ENCODE measurements at regions of chr16 and their contacts with region 1.

Region 1: GRCh38 chr16:69381231-69381630 is 4.6 kb downstream of the TERF2 start:
- DNase-seq: no peak
- H3K4me3 ChIP-seq: no peak overlapping the region
- H3K27ac ChIP-seq: no peak overlapping the region
- H3K27me3 ChIP-seq: no peaks in the 10 kb centered on the region
- CTCF ChIP-seq: no peak

Region 2: DNA sequence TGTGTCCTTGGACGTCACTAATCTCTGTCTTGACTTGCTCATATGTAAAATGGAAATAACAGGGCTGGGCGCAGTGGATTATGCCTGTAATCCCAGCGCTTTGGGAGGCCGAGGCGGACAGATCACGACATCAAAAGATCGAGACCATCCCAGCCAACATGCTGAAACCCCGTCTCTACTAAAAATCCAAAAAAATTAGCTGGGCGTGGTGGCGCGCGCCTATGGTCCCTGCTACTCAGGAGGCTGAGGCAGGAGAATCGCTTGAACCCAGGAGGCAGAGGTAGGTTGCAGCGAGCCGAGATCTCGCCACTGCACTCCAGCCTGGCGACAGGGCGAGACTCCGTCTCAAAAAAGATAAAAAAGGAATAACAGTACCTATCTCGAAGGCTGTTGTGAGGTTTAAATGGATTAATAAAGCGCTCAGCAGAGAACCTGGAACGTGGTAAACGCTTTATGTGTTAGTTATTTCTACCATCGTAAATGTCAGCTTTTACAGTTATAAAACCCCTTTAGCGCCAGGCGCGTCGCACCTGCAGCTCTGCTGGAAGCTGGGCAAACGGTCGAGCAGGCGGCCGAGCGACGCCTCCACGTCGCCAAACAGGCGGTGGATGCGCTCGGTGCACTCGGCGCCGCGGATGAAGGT is 42.5 kb before region 1 on chr16:
- CTCF ChIA-PET with region 1: no interaction called
- POLR2A ChIA-PET with region 1: no interaction called
- DNase-seq: no peak
- H3K4me3 ChIP-seq: peak overlapping the region; percentile 94
- H3K27ac ChIP-seq: peak overlapping the region; percentile 80
- H3K27me3 ChIP-seq: no peaks in the 10 kb centered on the region
- CTCF ChIP-seq: no peak

Region 3: GRCh38 chr16:69396187-69397061 is 15.2 kb after region 1 on chr16:
- CTCF ChIA-PET with region 1: interaction called, 18 read pairs
- POLR2A ChIA-PET with region 1: no interaction called
- DNase-seq: peak; percentile 92
- H3K4me3 ChIP-seq: no peak overlapping the region; the same call in none of the 2 replicates
- H3K27ac ChIP-seq: peak overlapping the region; percentile 82
- H3K27me3 ChIP-seq: no peaks in the 10 kb centered on the region
- CTCF ChIP-seq: peak; percentile 59

Region 4: DNA sequence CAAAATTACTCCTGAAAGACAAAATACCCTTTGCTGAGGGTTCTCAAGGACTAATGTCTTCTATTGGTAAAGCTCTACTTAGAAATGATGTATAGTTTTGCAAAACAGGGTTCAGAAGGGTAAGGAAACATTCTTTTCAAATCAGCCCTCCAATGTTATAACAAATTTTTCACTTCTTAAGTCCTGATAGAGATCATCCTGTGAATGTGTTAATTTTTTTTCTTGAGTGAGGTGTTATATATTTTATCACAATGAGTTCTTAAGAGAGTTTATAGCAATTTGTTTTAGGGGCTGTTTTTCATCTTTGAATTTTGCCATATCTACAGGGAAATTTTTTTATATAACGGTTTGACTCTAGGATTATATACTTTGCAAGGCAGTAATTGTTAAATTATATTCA is 72.7 kb after region 1 on chr16:
- CTCF ChIA-PET with region 1: no interaction called
- POLR2A ChIA-PET with region 1: no interaction called
- DNase-seq: no peak
- H3K4me3 ChIP-seq: no peak overlapping the region
- H3K27ac ChIP-seq: no peak overlapping the region
- H3K27me3 ChIP-seq: no peaks in the 10 kb centered on the region
- CTCF ChIP-seq: no peak

Region 5: DNA sequence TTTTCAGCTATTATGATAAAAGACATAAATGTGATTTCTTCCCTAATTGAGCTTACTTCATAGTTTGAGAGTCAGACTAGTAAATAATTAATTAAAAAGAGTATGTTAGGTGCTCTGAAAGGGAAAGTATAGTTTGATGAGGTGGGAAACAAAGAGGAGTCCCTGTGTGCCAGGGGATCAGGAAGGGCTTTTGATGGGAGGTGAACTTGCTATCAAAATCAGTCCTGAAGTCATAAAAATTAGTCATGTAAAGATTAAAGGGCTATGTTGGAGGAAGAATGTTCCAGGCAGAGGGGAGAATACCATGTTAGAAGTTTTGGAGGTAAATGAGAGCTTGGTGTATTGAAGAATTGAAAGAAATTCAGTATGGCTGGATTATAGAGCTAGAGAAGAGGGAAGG is 215.6 kb after region 1 on chr16:
- CTCF ChIA-PET with region 1: no interaction called
- POLR2A ChIA-PET with region 1: interaction called, 12 read pairs
- DNase-seq: no peak
- H3K4me3 ChIP-seq: no peak overlapping the region
- H3K27ac ChIP-seq: no peak overlapping the region
- H3K27me3 ChIP-seq: no peaks in the 10 kb centered on the region
- CTCF ChIP-seq: no peak

Measured in AG04450 (cell line).